Vagina (tissue), 2 donors: ENCODE measurements at regions of chr3 and their contacts with region 1.

Region 1: DNA sequence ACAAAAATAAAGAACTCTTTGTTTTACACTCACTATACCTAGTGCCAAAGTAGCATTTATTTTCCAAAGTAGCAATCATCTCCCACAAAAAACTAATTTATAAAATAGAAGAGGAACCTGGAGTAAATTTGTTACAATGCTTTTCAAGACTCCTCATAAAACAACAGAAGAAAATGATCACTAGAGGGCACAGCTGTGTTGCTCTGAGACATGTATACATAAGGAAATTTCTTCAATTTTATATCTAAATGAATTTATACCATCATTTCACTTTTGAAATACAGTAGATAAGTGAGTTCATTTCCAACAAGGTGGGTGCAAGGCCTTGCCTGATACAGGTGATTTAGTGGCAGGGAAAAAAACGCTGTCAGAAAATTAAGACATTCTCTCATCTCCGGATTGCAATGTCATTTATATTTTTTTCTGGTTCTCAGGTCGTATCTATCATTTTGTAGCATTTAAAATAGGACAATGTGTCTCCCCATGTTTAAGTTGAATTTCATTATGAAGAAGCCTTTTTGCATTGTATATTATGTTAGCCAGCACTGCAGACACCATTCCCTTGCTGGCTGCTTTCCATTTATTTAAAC is 25.3 kb upstream of the ARHGEF26 start:
- DNase-seq: no peak
- H3K4me3 ChIP-seq: no peak overlapping the region
- H3K27ac ChIP-seq: no peak overlapping the region
- H3K4me1 ChIP-seq: no peaks in the 10 kb centered on the region
- H3K27me3 ChIP-seq: no peaks in the 10 kb centered on the region
- CTCF ChIP-seq: peak in 1 of 3 experiments; percentile 15
- POLR2A ChIP-seq: no peak

Region 2: GRCh38 chr3:153463895-153464294 is 632.0 kb before region 1 on chr3:
- intact Hi-C with region 1: no loop called
- DNase-seq: no peak
- H3K4me3 ChIP-seq: no peak overlapping the region
- H3K27ac ChIP-seq: no peak overlapping the region
- H3K4me1 ChIP-seq: no peaks in the 10 kb centered on the region
- H3K27me3 ChIP-seq: no peaks in the 10 kb centered on the region
- CTCF ChIP-seq: no peak
- POLR2A ChIP-seq: no peak

Region 3: DNA sequence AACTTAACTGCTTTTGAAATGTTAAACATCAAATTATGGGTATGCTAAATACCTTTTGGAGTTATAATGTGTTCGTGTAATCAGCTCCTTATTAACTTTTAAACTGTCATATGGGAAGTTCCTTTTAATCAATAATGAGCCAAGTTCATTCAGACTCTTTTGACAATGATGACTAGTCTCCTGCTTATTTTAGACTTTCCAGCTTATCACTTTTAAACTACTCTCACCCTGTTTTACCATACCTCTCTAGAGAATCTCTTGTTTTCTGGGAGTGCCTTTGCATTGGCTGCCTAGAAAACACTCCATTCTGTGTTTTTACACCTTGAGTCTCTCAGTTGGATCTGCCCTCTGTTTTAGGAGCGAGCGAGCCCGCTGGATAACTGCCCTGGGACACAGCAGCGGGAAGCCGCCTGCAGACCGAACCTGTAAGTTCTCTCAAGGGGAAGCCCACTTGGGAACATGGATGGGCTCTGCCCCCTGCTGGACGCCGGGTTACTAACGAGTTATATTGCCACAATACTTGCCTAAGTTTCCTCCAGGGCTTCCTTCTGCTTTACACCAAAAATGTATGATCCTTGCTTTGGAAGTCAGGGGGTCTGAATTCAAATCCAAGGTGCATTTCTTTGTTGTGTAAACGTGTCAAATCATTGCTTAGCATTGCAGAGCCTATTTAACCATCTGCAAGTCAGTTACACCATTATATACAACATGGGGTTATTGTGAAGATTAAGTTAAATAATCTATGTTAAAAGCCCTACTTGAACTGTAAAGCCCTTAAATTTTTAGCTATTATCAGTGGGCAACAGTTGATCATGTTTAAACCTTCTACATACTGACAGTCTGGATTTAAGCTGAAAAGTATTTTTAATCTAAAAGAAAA is 157.1 kb after region 1 on chr3:
- intact Hi-C with region 1: loop called (anchors 10 kb)
- DNase-seq: no peak
- H3K4me3 ChIP-seq: no peak overlapping the region
- H3K27ac ChIP-seq: no peak overlapping the region
- H3K4me1 ChIP-seq: peaks cover 5% of the 10 kb centered on the region
- H3K27me3 ChIP-seq: no peaks in the 10 kb centered on the region
- CTCF ChIP-seq: peak; percentile 81 to 96 (median 94)
- POLR2A ChIP-seq: no peak

Region 4: GRCh38 chr3:154598166-154598565 is 502.2 kb after region 1 on chr3:
- intact Hi-C with region 1: no loop called
- DNase-seq: no peak
- H3K4me3 ChIP-seq: no peak overlapping the region
- H3K27ac ChIP-seq: no peak overlapping the region
- H3K4me1 ChIP-seq: no peaks in the 10 kb centered on the region
- H3K27me3 ChIP-seq: no peaks in the 10 kb centered on the region
- CTCF ChIP-seq: no peak
- POLR2A ChIP-seq: no peak